ENCODE measurements at regions of chr11 and their contacts with region 1.

Region 1: DNA sequence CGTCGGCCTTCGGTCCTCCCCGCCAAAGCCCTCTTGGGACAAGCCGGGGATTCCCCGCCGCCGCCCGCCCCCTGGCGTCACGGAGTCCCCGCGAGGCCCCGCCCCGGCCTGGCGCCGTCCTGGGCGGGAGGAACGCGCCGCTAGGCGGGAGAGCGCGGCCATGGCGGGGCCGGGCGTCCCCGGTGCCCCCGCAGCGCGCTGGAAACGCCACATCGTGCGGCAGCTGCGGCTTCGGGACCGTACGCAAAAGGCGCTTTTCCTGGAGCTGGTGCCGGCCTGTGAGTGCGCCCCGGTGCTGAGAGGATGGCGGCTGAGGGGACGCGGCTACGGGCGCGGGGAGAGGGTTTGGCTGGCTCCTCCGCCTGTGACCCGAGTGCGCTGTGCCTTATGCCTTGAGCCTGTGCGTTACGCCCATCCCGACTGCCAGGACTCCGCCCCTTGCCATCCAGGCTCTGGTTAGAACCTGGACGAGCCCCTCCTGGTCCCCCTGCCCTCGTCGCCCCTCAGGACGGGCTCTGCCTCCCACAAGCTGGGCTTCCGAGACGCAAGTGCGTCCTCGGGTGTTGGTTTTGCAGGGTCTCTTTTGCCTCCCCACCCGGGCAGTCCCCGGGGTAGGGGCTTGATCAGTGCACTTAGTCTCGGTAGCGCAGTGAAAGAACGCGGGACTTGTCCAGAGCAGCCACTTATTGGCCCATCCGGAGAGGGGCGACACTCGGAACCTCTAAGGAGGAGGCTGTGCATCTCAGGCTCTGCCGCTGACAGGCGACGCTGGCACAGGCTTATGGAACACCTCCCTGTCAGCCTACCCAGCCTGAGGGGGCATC is at the start of gene ATG16L2:
- DNase-seq: peak in 4 of 5 donors; percentile 84 to 92 (median 88)
- H3K4me3 ChIP-seq: peak within 1 kb of the TSS; percentile 60
- H3K27ac ChIP-seq: peak within 1 kb of the TSS; percentile 77 to 92
- H3K4me1 ChIP-seq: peaks cover 10% of the 10 kb centered on the region
- H3K27me3 ChIP-seq: no peaks in the 10 kb centered on the region
- CTCF ChIP-seq: peak in 2 of 3 donors; percentile 60 to 65
- EP300 ChIP-seq: no peak
- POLR2A ChIP-seq: peak; percentile 66
- total RNA-seq, gene ATG16L2: 25.2 to 42.3 (median 32.5) TPM

Region 2: DNA sequence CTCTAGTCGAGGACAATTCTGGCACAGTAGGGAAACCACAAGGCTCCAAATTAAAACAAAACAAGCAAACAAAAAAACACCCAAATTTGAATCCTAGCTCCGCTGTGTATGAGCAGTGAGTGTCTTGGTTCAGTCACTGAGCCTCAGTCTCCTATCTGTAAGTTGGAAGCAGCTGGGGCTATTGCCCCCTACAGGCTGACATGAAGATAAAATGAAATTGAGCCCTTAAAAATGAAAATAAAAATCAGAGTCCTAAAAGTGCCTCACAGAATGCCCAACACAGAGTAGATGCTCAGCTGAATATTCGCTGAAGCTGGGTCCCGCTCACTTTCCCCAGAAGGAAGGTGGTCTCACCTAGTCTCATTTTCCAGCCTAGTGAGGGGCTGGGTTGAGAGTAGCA is 205.5 kb before region 1 on chr11:
- intact Hi-C with region 1: loop called in 1 of 4 experiments (anchors 10 kb)
- DNase-seq: no peak
- H3K4me3 ChIP-seq: no peak overlapping the region
- H3K27ac ChIP-seq: no peak overlapping the region
- H3K4me1 ChIP-seq: peaks cover 20% of the 10 kb centered on the region
- H3K27me3 ChIP-seq: no peaks in the 10 kb centered on the region
- CTCF ChIP-seq: no peak
- EP300 ChIP-seq: no peak
- POLR2A ChIP-seq: no peak

Measured in ovary (tissue), 10 donors.